ENCODE measurements at regions of chr4 and their contacts with region 1.

Region 1: DNA sequence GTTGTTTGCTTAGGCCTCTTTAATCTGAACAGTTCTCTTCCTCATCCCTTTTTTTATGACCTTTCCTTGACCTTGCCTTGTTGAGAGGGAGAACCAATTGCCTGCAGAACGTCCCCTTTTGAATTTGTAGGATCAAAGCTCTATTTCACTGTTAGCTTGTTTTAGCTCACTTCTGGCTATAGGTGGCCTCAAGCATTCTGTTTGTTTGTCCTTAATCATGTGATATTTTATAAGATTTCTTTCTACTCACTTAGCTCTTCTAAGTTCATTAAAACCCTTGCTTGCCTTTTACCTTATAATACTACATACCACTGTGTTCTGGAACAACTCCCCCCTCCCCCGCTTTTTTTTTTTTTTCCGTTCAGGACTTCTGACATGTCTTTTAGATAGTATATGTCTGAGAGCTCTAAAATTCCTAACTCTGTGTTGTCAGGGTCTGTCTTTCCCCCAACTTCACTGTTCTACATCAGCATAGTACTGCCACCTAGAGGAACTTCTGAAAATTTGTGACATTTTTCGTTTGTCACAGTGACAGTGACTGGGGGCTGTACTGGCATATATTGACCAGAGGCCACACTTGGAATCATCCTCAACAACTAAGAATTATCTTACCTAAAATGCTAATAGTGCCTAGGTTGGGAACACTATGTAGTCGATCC is 128.5 kb downstream of the LARP7 start:
- DNase-seq: peak in 1 of 35 experiments; percentile 28
- ATAC-seq: no peak
- H3K4me3 ChIP-seq: no peak overlapping the region
- H3K4me3 Mint-ChIP-seq: no peak overlapping the region
- H3K27ac ChIP-seq: no peak overlapping the region
- H3K27ac Mint-ChIP-seq: no peak overlapping the region
- H3K4me1 ChIP-seq: no peaks in the 10 kb centered on the region
- H3K4me1 Mint-ChIP-seq: peaks cover 0 to 2% (median 0%) of the 10 kb centered on the region in 3 donors
- H3K27me3 ChIP-seq: peaks cover 0 to 3% of the 10 kb centered on the region in 2 experiments
- H3K27me3 Mint-ChIP-seq: peaks cover 0 to 8% of the 10 kb centered on the region in 2 donors

Region 2: GRCh38 chr4:112145326-112145819 is 620.1 kb before region 1 on chr4 and contains the start of gene FAM241A:
- CTCF ChIA-PET with region 1: interaction called in 1 of 2 experiments, 11 read pairs
- POLR2A ChIA-PET with region 1: no interaction called
- DNase-seq: peak; percentile 75 to 96 (median 86)
- ATAC-seq: peak; percentile 90 to 98 (median 96)
- H3K4me3 ChIP-seq: peak within 1 kb of the TSS; percentile 90 to 91
- H3K4me3 Mint-ChIP-seq: peak within 1 kb of the TSS; percentile 82 to 89 (median 86)
- H3K27ac ChIP-seq: peak within 1 kb of the TSS; percentile 80
- H3K27ac Mint-ChIP-seq: peak within 1 kb of the TSS; percentile 68 to 95
- H3K4me1 ChIP-seq: peaks cover 5 to 8% of the 10 kb centered on the region in 2 experiments
- H3K4me1 Mint-ChIP-seq: peaks cover 28 to 45% (median 28%) of the 10 kb centered on the region in 3 donors
- H3K27me3 ChIP-seq: no peaks in the 10 kb centered on the region
- H3K27me3 Mint-ChIP-seq: no peaks in the 10 kb centered on the region
- total RNA-seq, gene FAM241A: 1.4 to 3.4 (median 2.0) TPM

Region 3: DNA sequence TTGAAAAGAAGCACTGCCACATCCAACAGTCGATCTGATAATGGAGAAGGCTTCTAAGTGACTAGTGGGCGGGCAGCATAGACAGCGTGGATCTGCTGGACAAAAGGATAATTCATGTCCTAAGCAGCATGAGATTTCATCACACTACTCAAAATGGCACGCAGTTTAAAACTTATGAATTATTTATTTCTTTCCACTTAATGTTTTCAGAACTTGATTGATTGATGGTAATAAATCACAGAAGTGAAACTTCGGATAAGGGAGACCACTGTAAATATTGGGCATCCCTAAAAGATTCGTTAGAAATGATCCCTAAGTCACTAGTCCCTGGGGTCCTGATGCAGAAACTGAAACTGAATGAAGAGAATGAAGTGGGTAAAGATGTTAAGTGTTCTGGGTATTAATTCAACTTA is 191.0 kb after region 1 on chr4:
- CTCF ChIA-PET with region 1: interaction called in 1 of 2 experiments, 10 read pairs
- POLR2A ChIA-PET with region 1: no interaction called
- DNase-seq: no peak
- ATAC-seq: no peak
- H3K4me3 ChIP-seq: no peak overlapping the region
- H3K4me3 Mint-ChIP-seq: no peak overlapping the region
- H3K27ac ChIP-seq: no peak overlapping the region
- H3K27ac Mint-ChIP-seq: no peak overlapping the region
- H3K4me1 ChIP-seq: no peaks in the 10 kb centered on the region
- H3K4me1 Mint-ChIP-seq: peaks cover 0 to under 1% (median under 1%) of the 10 kb centered on the region in 3 donors
- H3K27me3 ChIP-seq: no peaks in the 10 kb centered on the region
- H3K27me3 Mint-ChIP-seq: peaks cover 3 to 4% of the 10 kb centered on the region in 2 donors

Region 4: DNA sequence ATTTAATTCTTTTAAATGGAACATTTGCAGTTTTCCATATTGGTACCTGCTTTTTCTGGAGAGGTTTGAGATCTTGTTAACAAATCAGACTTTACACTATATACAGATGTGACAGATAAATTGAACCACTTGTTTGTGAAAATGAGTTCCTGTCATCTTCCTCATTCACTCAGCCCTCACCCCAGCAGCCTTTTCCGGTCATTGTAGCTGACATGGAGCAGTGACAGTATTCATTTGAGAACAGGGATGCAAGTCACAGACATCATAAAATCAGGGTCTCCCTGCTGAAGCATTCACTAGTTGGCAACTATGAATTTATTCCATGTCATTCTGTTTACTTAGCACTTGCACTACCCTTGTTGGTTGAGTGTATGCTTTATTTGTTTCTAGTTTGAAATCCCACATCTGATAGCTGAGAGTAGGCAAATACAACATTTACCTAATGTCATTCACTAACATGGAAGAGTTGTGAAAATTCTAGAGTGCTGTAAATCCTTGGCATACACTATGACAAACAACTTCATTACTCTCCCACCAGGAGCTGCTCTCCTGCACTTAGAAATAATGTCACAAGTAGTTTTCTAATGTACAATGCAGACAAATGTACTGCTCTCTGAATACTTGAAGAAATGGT is 1912.0 kb after region 1 on chr4:
- CTCF ChIA-PET with region 1: interaction called in 1 of 2 experiments, 17 read pairs
- POLR2A ChIA-PET with region 1: no interaction called
- DNase-seq: no peak
- ATAC-seq: no peak
- H3K4me3 ChIP-seq: no peak overlapping the region
- H3K4me3 Mint-ChIP-seq: no peak overlapping the region
- H3K27ac ChIP-seq: no peak overlapping the region
- H3K27ac Mint-ChIP-seq: no peak overlapping the region
- H3K4me1 ChIP-seq: no peaks in the 10 kb centered on the region
- H3K4me1 Mint-ChIP-seq: no peaks in the 10 kb centered on the region
- H3K27me3 ChIP-seq: peaks cover 0 to 2% of the 10 kb centered on the region in 2 experiments
- H3K27me3 Mint-ChIP-seq: peaks cover 0 to 5% of the 10 kb centered on the region in 2 donors

Measured in T-cell (primary cell).